ENCODE measurements at regions of chr22 and their contacts with region 1.

Region 1: DNA sequence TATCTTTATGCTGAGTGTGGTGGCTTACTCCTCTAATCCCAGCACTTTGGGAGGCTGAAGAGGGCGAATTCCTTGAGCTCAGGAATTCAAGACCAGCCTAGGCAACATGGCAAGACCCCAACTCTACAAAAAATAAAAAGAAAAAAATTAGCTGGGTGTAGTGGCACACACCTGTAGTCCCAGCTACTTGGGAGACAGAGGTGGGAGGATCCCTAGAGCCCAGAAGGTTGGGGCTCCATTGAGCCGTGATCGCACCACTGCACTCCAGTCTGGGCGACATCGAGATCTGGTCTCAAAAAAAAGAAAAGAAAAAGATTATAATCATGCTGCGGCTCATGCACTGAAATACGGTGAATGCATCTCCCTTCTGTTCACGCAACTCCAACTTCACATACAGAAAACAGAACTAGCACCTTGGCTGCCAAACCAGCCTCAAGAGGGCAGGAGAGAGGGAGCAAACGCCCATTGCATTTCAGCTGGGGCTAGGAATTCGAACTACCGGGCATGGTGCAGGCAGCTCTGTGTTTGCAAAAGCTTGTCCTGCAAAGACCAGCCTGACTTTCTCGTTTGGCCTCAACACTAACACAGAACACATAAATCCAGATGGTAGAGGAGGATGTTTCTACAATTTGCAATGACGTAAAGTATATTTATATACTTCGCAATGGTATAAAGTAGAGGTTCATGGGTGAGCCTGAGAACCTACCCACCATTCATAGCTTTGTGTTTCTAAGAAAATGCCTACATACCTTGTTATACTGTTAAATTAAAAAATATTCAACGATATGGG is 6.3 kb upstream of the SYNGR1 start:
- DNase-seq: peak; percentile 77
- ATAC-seq: peak; percentile 95
- H3K4me3 Mint-ChIP-seq: no peak overlapping the region
- H3K27ac Mint-ChIP-seq: no peak overlapping the region
- H3K4me1 Mint-ChIP-seq: peaks cover 18% of the 10 kb centered on the region
- H3K27me3 Mint-ChIP-seq: peaks cover 3% of the 10 kb centered on the region
- CTCF ChIP-seq: 0 out of 2 replicates have a peak, but pooled peaks have one; percentile 11

Region 2: DNA sequence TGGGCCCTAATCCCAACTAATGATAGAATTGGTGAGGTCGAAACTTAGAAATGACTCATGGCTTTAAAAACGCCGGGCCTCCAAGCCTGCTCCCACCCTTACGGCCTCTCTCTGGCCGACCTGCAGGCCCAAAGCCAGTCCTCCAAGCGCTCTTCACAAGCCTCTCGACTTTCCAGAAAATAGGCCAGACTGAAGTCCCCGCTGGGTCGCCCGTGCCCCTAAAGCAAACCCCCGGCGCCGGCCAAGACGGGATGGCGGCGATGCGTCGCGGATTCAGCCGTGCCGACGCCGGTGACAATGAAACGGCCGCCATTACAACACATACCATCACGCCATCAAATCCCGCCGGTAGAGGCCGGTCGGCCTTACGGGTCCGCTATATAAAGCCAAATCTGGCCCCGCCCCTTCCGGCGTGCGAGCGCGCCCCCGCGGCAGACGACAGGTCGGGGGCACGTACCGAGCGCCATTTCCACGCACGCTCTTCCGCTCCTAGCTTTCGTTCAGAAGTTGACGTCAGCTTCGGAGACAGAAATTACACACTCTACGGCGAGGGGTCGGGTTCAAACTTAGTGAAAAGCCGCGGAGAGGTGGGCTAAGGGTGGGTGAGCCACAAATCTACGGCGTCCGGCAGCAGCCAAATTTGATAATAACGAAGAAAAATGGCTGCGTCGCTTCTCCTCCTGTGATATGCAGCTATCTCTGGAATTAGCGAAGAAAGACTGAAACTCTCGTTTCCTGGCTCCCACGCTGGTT is 24.0 kb before region 1 on chr22 and contains the start of gene RPL3:
- CTCF ChIA-PET with region 1: interaction called, 24 read pairs
- POLR2A ChIA-PET with region 1: interaction called, 13 read pairs
- DNase-seq: peak; percentile 93
- ATAC-seq: peak; percentile 64
- H3K4me3 Mint-ChIP-seq: peak within 1 kb of the TSS; percentile 99
- H3K27ac Mint-ChIP-seq: peak within 1 kb of the TSS; percentile 100
- H3K4me1 Mint-ChIP-seq: peaks cover 44% of the 10 kb centered on the region
- H3K27me3 Mint-ChIP-seq: peaks cover 4% of the 10 kb centered on the region; the same call in 1 of the 2 replicates
- CTCF ChIP-seq: no peak
- total RNA-seq, gene RPL3: 3,009 to 3,279 TPM (median 3,249 TPM) in 3 replicates

Region 3: DNA sequence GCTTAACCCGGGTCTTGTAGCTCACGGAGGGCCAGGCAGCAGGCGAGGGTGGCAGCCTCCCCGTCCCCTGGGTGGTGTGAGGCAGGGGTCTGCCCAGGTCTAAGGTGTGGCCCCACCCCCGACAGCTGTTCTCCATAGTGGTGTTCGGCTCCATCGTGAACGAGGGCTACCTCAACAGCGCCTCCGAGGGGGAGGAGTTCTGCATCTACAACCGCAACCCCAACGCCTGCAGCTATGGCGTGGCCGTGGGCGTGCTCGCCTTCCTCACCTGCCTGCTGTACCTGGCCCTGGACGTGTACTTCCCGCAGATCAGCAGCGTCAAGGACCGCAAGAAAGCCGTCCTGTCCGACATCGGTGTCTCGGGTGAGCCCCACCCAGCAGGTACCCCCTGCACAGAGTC is 30.7 kb after region 1 on chr22:
- CTCF ChIA-PET with region 1: interaction called, 16 read pairs
- POLR2A ChIA-PET with region 1: no interaction called
- DNase-seq: peak; percentile 57
- ATAC-seq: peak; percentile 77
- H3K4me3 Mint-ChIP-seq: no peak overlapping the region
- H3K27ac Mint-ChIP-seq: no peak overlapping the region
- H3K4me1 Mint-ChIP-seq: peaks cover 9% of the 10 kb centered on the region; the same call in 1 of the 2 replicates
- H3K27me3 Mint-ChIP-seq: no peaks in the 10 kb centered on the region
- CTCF ChIP-seq: no peak

Region 4: GRCh38 chr22:39388261-39389011 is 45.0 kb after region 1 on chr22:
- CTCF ChIA-PET with region 1: interaction called, 10 read pairs
- POLR2A ChIA-PET with region 1: no interaction called
- DNase-seq: peak; percentile 96
- ATAC-seq: peak; percentile 96
- H3K4me3 Mint-ChIP-seq: peak overlapping the region; percentile 81
- H3K27ac Mint-ChIP-seq: no peak overlapping the region
- H3K4me1 Mint-ChIP-seq: peaks cover 6% of the 10 kb centered on the region
- H3K27me3 Mint-ChIP-seq: peaks cover 30% of the 10 kb centered on the region
- CTCF ChIP-seq: no peak

Region 5: GRCh38 chr22:39405346-39406085 is 62.1 kb after region 1 on chr22:
- CTCF ChIA-PET with region 1: interaction called, 25 read pairs
- POLR2A ChIA-PET with region 1: no interaction called
- DNase-seq: no peak
- ATAC-seq: no peak
- H3K4me3 Mint-ChIP-seq: no peak overlapping the region
- H3K27ac Mint-ChIP-seq: peak overlapping the region; percentile 43; the same call in 1 of the 2 replicates
- H3K4me1 Mint-ChIP-seq: peaks cover 6% of the 10 kb centered on the region
- H3K27me3 Mint-ChIP-seq: no peaks in the 10 kb centered on the region
- CTCF ChIP-seq: no peak

Region 6: DNA sequence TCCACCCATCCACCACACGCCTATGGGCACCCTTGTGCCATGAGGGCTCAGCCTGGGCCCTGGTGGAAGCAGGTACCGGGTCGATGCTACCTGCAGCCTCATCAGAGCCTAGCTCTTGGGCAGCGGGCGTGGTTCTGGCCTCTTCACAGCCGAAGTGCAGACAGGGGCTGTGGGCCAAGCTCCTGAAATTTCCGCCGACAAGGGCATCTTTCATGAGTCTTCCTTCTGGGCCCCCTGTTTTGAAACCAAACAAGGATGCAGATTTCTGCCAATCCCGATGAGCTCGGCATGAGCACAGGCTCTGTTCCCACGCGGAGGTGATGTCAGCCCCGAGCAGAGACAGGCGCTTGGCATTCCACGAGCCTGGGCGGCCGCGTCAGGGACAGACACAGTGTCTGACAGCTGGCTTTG is 90.8 kb after region 1 on chr22:
- CTCF ChIA-PET with region 1: interaction called, 10 read pairs
- POLR2A ChIA-PET with region 1: no interaction called
- DNase-seq: no peak
- ATAC-seq: no peak
- H3K4me3 Mint-ChIP-seq: no peak overlapping the region
- H3K27ac Mint-ChIP-seq: no peak overlapping the region
- H3K4me1 Mint-ChIP-seq: peaks cover 22% of the 10 kb centered on the region
- H3K27me3 Mint-ChIP-seq: no peaks in the 10 kb centered on the region
- CTCF ChIP-seq: no peak

Region 7: GRCh38 chr22:39454385-39454871 is 111.0 kb after region 1 on chr22:
- CTCF ChIA-PET with region 1: interaction called, 12 read pairs
- POLR2A ChIA-PET with region 1: no interaction called
- DNase-seq: no peak
- ATAC-seq: peak; percentile 16
- H3K4me3 Mint-ChIP-seq: peak overlapping the region; percentile 17; the same call in 1 of the 2 replicates
- H3K27ac Mint-ChIP-seq: no peak overlapping the region; the same call in 1 of the 2 replicates
- H3K4me1 Mint-ChIP-seq: peaks cover 39% of the 10 kb centered on the region
- H3K27me3 Mint-ChIP-seq: peaks cover 47% of the 10 kb centered on the region
- CTCF ChIP-seq: no peak

Measured in WTC11 (cell line).